ENCODE measurements at regions of chr7 and their contacts with region 1.

Region 1: GRCh38 chr7:7566651-7567611 is at the start of gene MIOS:
- DNase-seq: peak; percentile 39 to 88
- H3K4me3 ChIP-seq: peak within 1 kb of the TSS; percentile 75 to 98 (median 84)
- H3K27ac ChIP-seq: peak within 1 kb of the TSS; percentile 83; the same call in 1 of the 2 replicates
- H3K4me1 ChIP-seq: peaks cover 5 to 11% (median 6%) of the 10 kb centered on the region in 4 experiments; a peak in 6 of 7 replicates
- H3K27me3 ChIP-seq: no peaks in the 10 kb centered on the region
- CTCF ChIP-seq: no peak
- EP300 ChIP-seq: no peak; a peak in 1 of 3 replicates
- POLR2A ChIP-seq: peak; percentile 77 to 86
- RAD21 ChIP-seq: 0 out of 4 replicates have a peak, but pooled peaks have one; percentile 1
- total RNA-seq, gene MIOS: 46.5 and 50.7 TPM in 2 replicates

Region 2: GRCh38 chr7:7577888-7578287 is 11.0 kb after region 1 on chr7:
- CTCF ChIA-PET with region 1: interaction called, 3 read pairs
- POLR2A ChIA-PET with region 1: interaction called, 12 read pairs
- DNase-seq: no peak
- H3K4me3 ChIP-seq: no peak overlapping the region
- H3K27ac ChIP-seq: no peak overlapping the region
- H3K4me1 ChIP-seq: peaks cover 2 to 5% (median 3%) of the 10 kb centered on the region in 4 experiments; a peak in 5 of 7 replicates
- H3K27me3 ChIP-seq: no peaks in the 10 kb centered on the region
- CTCF ChIP-seq: no peak
- EP300 ChIP-seq: no peak
- POLR2A ChIP-seq: no peak
- RAD21 ChIP-seq: no peak

Measured in H1 (cell line).